PC-3 (cell line): ENCODE measurements at regions of chr19 and their contacts with region 1.

Region 1: GRCh38 chr19:48378194-48378570 is 13.2 kb downstream of the KDELR1 start:
- DNase-seq: no peak
- ATAC-seq: no peak
- H3K4me3 ChIP-seq: no peak overlapping the region
- H3K27ac ChIP-seq: no peak overlapping the region
- H3K4me1 ChIP-seq: peaks cover 2% of the 10 kb centered on the region
- H3K27me3 ChIP-seq: no peaks in the 10 kb centered on the region
- CTCF ChIP-seq: no peak

Region 2: GRCh38 chr19:48492925-48493717 is 114.9 kb after region 1 on chr19:
- CTCF ChIA-PET with region 1: interaction called, 3 read pairs
- POLR2A ChIA-PET with region 1: interaction called, 10 read pairs
- intact Hi-C with region 1: no loop called
- DNase-seq: peak; percentile 94
- ATAC-seq: peak; percentile 79
- H3K4me3 ChIP-seq: peak overlapping the region; percentile 70
- H3K27ac ChIP-seq: no peak overlapping the region
- H3K4me1 ChIP-seq: peaks cover 13% of the 10 kb centered on the region
- H3K27me3 ChIP-seq: no peaks in the 10 kb centered on the region
- CTCF ChIP-seq: no peak

Region 3: DNA sequence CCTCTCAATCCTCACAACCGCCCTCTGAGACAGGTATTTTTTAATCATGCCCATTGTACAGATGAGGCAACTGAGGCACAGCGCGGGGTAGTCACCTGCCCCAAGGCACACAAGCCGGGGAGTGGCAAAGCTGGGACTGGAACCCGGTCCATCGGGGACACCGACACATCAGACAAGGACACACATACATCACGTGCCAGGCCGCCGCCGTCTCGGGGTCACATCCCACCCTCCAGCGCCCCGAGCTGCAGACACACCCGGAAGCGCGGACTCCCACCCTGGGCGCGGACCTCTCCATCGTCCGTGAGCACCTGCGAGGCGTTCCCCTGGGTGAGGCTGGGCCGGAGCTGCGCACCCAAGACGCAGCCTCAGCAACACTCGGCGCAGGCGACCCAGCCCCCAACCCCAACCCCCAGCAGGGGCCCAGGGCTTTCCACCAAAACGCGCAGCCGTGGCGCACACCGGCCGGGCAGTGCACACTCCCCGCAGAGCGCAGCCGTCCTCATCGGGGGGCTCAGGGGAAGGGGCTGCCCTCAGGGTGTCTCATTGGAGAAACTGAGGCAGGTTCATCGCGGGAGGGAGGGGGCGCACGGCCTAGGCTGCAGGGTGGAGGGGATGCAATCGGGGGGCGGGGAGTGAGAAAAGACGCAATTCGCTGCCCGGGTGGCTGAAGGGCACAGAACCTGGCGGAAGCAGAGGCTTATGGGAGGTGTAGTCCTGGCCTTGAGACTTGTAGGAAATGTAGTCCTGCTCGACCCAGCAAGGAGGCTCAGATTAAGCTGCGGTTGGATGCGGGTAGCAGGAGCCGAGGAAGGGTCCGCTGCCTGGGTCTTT is 135.3 kb after region 1 on chr19:
- CTCF ChIA-PET with region 1: no interaction called
- POLR2A ChIA-PET with region 1: no interaction called
- intact Hi-C with region 1: no loop called
- DNase-seq: peak; percentile 64
- ATAC-seq: peak; percentile 82
- H3K4me3 ChIP-seq: peak overlapping the region; percentile 81
- H3K27ac ChIP-seq: no peak overlapping the region
- H3K4me1 ChIP-seq: no peaks in the 10 kb centered on the region; the same call in 1 of the 2 replicates
- H3K27me3 ChIP-seq: no peaks in the 10 kb centered on the region
- CTCF ChIP-seq: no peak